PC-9 (cell line): ENCODE measurements at regions of chr9 and their contacts with region 1.

Region 1: DNA sequence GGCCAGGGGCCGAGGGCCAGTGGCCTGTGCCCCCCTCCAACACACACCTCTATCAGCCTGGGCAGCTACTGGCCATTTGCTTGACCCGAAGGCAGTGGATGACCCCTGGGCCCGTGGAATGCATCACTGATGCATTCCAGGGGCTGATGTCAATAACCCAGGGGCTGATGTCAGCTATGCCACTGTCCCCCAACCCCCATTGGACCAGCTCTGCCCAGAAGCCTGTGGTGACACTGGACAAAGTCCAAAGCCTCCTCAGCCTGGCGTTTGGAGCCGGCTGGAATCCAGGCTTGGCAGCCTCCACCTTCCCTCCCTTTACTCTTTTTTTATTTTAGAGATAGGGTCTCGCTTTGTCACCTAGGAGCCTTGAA is 6.0 kb downstream of the KYAT1 start:
- DNase-seq: peak; percentile 63 to 81
- H3K4me3 ChIP-seq: no peak overlapping the region
- H3K27ac ChIP-seq: peak overlapping the region; percentile 92
- H3K4me1 ChIP-seq: peaks cover 29% of the 10 kb centered on the region
- H3K27me3 ChIP-seq: no peaks in the 10 kb centered on the region
- CTCF ChIP-seq: no peak

Region 2: DNA sequence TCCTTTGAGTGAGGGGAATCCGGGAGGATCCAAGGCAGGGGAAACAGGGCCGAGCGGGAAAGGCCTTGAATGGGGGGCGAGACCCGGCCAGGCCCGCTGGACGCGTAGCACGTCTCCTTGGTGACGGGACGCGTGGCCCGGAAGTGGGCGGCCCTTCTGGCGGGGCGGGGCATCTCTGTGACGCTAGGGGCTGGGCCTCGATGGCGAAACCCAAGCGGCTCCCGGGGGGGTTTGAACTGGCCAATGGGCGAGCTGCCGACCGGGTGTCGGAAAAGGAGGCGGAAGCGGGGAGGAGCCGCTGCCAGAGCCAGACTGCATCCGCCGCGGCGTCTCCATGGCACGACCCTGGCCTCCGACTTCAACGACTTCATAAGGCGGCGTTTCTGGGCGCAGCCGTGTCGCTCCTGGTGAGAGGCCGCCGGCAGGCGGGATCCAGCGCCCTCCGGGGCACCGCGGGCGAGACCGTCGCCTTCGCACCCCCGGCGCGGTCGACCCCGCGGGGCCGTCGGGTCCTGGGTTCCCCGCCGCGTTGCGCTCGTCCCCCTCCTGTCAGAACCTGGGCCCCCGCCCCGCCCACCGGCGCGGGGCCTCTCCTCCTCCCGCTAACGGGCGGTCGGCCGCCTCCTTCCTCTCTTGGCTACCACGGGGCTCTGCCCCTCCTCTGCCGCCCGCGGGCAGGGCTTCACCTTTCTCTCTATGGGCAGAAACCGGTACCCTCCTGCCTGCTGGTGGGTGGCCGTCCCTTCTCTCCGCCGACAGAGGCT is 419.7 kb before region 1 on chr9 and contains the start of gene ODF2:
- CTCF ChIA-PET with region 1: no interaction called
- POLR2A ChIA-PET with region 1: no interaction called
- intact Hi-C with region 1: no loop called
- DNase-seq: peak; percentile 83 to 99
- H3K4me3 ChIP-seq: peak within 1 kb of the TSS; percentile 90
- H3K27ac ChIP-seq: no peak within 1 kb of the TSS
- H3K4me1 ChIP-seq: 0 out of 2 replicates have a peak, but pooled peaks cover 6% of the 10 kb centered on the region
- H3K27me3 ChIP-seq: no peaks in the 10 kb centered on the region
- CTCF ChIP-seq: no peak
- total RNA-seq, gene ODF2: 49.4 and 58.2 TPM in 2 replicates

Region 3: GRCh38 chr9:128786681-128787601 is 88.8 kb before region 1 on chr9 and contains the start of gene TBC1D13:
- CTCF ChIA-PET with region 1: no interaction called
- POLR2A ChIA-PET with region 1: interaction called, 14 read pairs
- intact Hi-C with region 1: no loop called
- DNase-seq: peak; percentile 71 to 88
- H3K4me3 ChIP-seq: peak within 1 kb of the TSS; percentile 96
- H3K27ac ChIP-seq: peak within 1 kb of the TSS; percentile 43
- H3K4me1 ChIP-seq: peaks cover 16% of the 10 kb centered on the region
- H3K27me3 ChIP-seq: no peaks in the 10 kb centered on the region
- CTCF ChIP-seq: no peak
- total RNA-seq, gene TBC1D13: 38.2 and 41.9 TPM in 2 replicates

Region 4: DNA sequence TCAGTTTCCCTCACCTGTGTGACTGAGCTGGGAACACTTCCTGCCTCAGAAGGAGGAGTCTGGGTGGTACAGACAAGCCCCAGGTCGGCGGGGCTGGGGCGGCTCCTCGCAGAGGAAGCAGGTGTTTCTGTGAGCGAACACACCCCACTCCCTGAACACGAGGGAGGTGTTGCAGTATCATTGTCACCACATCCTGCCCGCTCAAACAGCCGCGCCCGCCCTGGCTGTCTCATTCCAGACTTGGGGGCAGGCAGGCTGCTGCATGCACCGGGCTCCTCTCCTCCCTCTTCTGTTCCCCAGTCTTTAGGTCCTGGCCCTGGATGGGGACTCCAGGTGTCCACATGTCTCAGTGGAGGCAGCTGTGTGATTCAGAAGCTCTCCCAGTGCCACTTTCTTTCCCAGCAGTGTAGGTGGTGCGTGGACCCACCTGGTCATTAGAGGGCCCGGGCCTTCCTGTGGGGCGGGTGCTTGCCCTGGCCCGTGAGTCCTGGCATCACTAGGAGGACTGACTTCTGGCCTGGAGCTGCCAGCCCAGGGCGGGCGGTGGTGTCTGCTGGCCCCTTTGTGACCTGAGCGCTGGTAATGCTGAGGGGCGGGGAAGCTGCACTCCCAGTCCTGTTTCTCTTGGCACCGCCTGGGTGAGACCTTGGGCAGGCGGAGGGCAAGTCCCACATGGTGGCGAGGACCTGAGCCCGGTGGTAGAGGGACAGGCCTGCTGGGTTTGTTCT is 26.7 kb after region 1 on chr9:
- CTCF ChIA-PET with region 1: interaction called, 5 read pairs
- POLR2A ChIA-PET with region 1: interaction called, 12 read pairs
- intact Hi-C with region 1: no loop called
- DNase-seq: peak; percentile 62 to 93
- H3K4me3 ChIP-seq: no peak overlapping the region; the same call in 1 of the 2 replicates
- H3K27ac ChIP-seq: peak overlapping the region; percentile 88
- H3K4me1 ChIP-seq: peaks cover 67% of the 10 kb centered on the region
- H3K27me3 ChIP-seq: no peaks in the 10 kb centered on the region
- CTCF ChIP-seq: no peak